H1 (cell line): ENCODE measurements at regions of chr6 and their contacts with region 1.

Region 1: GRCh38 chr6:43758617-43759050 is 11.4 kb upstream of the VEGFA start:
- DNase-seq: peak in 1 of 2 experiments; percentile 91
- H3K4me3 ChIP-seq: no peak overlapping the region
- H3K27ac ChIP-seq: no peak overlapping the region
- H3K4me1 ChIP-seq: peaks cover 0 to 9% (median 5%) of the 10 kb centered on the region in 4 experiments; a peak in 5 of 7 replicates
- H3K27me3 ChIP-seq: no peaks in the 10 kb centered on the region
- CTCF ChIP-seq: peak; percentile 87 to 95 (median 94)
- EP300 ChIP-seq: no peak
- POLR2A ChIP-seq: no peak
- RAD21 ChIP-seq: peak; percentile 81 to 88

Region 2: GRCh38 chr6:43733471-43734293 is 25.0 kb before region 1 on chr6:
- CTCF ChIA-PET with region 1: interaction called, 14 read pairs
- POLR2A ChIA-PET with region 1: interaction called, 3 read pairs
- DNase-seq: no peak
- H3K4me3 ChIP-seq: no peak overlapping the region
- H3K27ac ChIP-seq: no peak overlapping the region
- H3K4me1 ChIP-seq: peaks cover 0 to 11% (median under 1%) of the 10 kb centered on the region in 4 experiments; a peak in 3 of 7 replicates
- H3K27me3 ChIP-seq: no peaks in the 10 kb centered on the region
- CTCF ChIP-seq: no peak
- EP300 ChIP-seq: no peak
- POLR2A ChIP-seq: no peak
- RAD21 ChIP-seq: no peak

Region 3: GRCh38 chr6:43746613-43747102 is 12.0 kb before region 1 on chr6:
- CTCF ChIA-PET with region 1: interaction called, 137 read pairs
- POLR2A ChIA-PET with region 1: interaction called, 4 read pairs
- DNase-seq: peak in 1 of 2 experiments; percentile 42
- H3K4me3 ChIP-seq: no peak overlapping the region
- H3K27ac ChIP-seq: no peak overlapping the region
- H3K4me1 ChIP-seq: peaks cover 0 to 10% (median 3%) of the 10 kb centered on the region in 4 experiments; a peak in 4 of 7 replicates
- H3K27me3 ChIP-seq: no peaks in the 10 kb centered on the region
- CTCF ChIP-seq: no peak
- EP300 ChIP-seq: no peak
- POLR2A ChIP-seq: no peak
- RAD21 ChIP-seq: no peak